Posterior vena cava (tissue), 2 donors: ENCODE measurements at regions of chr12 and their contacts with region 1.

Region 1: GRCh38 chr12:132660052-132660451 is 27.1 kb downstream of the POLE start:
- DNase-seq: no peak

Region 2: GRCh38 chr12:131441060-131441396 is 1219.0 kb before region 1 on chr12:
- intact Hi-C with region 1: loop called in 1 of 2 experiments (anchors 10 kb)
- DNase-seq: no peak

Region 3: GRCh38 chr12:132600048-132601032 is 59.7 kb before region 1 on chr12:
- intact Hi-C with region 1: no loop called
- DNase-seq: peak; percentile 91

Region 4: DNA sequence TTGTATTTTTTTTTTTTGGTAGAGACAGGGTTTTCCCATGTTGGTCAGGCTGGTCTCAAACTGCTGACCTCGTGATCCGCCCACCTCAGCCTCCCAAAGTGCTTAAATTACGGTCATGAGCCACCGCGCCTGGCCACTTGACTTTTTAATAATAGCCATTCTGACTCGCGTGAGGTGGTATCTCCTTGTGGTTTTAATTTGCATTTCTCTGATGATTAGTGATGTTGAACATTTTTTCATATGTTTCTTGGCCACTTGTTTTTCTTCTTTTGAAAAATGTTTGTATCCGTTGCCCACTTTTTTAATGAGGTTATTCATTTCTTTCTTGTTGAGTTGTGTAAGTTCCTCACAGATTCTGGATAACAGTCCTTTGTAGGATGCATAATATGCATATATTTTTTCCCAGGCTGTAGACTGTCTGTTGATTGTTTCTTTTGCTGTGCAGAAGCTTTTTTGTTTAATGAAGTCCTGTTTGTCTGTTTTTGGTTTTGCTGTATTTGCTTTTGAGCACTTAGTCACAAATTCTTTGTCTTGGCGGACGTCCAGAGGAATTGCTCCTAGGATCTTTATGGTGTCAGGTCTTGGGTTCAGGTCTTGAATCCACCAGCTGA is 40.3 kb after region 1 on chr12:
- intact Hi-C with region 1: no loop called
- DNase-seq: no peak